WTC11 (cell line): ENCODE measurements at regions of chr15 and their contacts with region 1.

Region 1: GRCh38 chr15:55434989-55435825 is 26.9 kb downstream of the PIERCE2 start:
- DNase-seq: no peak
- ATAC-seq: peak; percentile 80
- H3K4me3 Mint-ChIP-seq: no peak overlapping the region
- H3K27ac Mint-ChIP-seq: no peak overlapping the region
- H3K4me1 Mint-ChIP-seq: peaks cover 4% of the 10 kb centered on the region; the same call in 1 of the 2 replicates
- H3K27me3 Mint-ChIP-seq: no peaks in the 10 kb centered on the region
- CTCF ChIP-seq: no peak

Region 2: GRCh38 chr15:55168329-55168974 is 266.8 kb before region 1 on chr15:
- CTCF ChIA-PET with region 1: interaction called, 10 read pairs
- POLR2A ChIA-PET with region 1: no interaction called
- DNase-seq: peak; percentile 80
- ATAC-seq: peak; percentile 99
- H3K4me3 Mint-ChIP-seq: no peak overlapping the region
- H3K27ac Mint-ChIP-seq: no peak overlapping the region
- H3K4me1 Mint-ChIP-seq: no peaks in the 10 kb centered on the region
- H3K27me3 Mint-ChIP-seq: no peaks in the 10 kb centered on the region
- CTCF ChIP-seq: peak; percentile 65

Region 3: DNA sequence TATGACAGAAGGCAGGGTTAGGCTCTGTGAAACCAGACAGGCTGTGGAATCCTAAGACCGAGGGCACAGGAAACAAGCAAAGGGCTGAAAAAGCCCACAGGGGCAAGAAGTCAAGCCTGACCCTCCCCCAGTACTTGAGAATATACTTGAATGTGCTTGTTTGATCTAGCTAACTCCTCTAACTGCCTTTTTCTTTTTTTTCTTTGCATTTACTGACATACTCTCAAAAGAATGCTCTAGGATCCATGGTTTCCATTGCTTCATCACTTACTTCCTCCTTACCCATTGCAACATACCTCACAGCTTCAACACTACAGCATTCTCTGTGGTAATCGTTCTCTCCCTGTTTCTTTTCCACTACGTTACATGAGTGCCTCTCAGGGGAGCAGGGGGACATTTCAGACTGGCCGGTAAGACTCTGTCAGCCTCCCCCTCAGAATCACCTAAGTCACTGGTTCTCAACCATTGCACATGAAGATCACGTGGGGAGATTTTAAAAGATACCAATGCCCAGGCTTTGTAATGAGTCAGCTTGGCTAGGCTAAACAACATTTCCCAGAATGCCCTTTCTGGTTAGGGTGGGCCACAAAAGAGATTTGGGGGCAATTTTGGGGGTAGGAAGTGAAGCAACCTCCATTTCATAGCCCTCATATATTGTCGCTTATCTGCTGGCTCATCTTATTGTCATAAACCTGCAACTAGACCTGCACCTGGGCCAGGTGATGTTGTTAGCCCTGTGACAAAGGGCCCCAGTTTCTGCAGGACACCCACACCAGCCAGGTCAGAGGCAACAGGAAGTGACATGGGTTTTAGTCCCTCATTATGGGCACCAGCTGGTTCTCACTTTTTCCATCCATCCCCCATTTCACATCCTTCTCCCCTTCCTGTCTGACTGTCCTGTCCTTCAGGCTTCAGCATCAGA is 213.9 kb before region 1 on chr15:
- CTCF ChIA-PET with region 1: interaction called, 32 read pairs
- POLR2A ChIA-PET with region 1: no interaction called
- DNase-seq: no peak
- ATAC-seq: no peak
- H3K4me3 Mint-ChIP-seq: no peak overlapping the region
- H3K27ac Mint-ChIP-seq: peak overlapping the region; percentile 34
- H3K4me1 Mint-ChIP-seq: peaks cover 17% of the 10 kb centered on the region
- H3K27me3 Mint-ChIP-seq: no peaks in the 10 kb centered on the region
- CTCF ChIP-seq: no peak

Region 4: DNA sequence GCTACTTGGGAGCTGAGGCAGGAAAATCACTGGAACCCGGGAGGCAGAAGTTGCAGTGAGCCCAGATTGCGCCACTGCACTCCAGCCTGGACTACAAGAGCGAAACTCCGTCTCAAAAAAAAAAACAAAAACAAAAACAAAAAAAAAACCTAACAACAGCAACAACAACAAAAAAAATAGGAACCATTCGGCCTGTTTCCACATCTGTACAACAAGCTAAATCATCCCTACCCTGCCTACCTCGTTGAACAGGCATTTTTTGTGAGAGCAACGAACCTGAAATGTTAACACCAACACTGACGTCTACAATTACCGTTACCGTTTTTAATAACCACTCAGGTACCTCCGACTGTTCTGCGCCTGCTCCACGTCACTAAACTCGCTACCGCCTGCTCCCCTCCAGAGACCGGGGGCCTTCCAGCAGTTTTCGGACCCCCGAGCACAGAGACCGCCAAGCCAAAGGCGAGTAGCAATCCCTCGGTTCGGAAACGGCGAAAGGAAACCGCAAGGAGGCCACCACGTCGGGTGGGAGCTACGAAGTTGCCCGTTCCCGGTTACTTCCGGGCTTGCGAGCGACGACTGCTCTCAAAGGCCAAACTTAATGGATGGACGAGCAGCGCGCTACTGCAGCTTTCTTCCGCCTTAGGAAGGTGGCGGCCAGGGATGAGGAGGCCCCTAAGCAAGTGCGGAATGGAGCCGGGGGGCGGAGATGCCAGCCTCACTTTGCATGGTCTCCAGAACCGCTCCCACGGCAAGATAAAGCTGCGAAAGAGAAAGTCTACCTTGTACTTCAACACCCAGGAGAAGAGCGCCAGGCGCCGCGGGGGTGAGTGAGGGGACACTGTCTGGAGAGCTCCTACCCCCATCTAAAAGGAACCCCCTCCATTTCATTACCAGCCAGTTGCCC is 116.4 kb before region 1 on chr15 and contains the starts of genes PIGB and PIGBOS1:
- CTCF ChIA-PET with region 1: interaction called, 11 read pairs
- POLR2A ChIA-PET with region 1: no interaction called
- DNase-seq: peak; percentile 82
- ATAC-seq: peak; percentile 95
- H3K4me3 Mint-ChIP-seq: peak within 1 kb of the TSS; percentile 94
- H3K27ac Mint-ChIP-seq: peak within 1 kb of the TSS; percentile 96
- H3K4me1 Mint-ChIP-seq: peaks cover 35% of the 10 kb centered on the region
- H3K27me3 Mint-ChIP-seq: no peaks in the 10 kb centered on the region
- CTCF ChIP-seq: no peak
- total RNA-seq, gene PIGB: 5.2 to 8.7 TPM (median 6.9 TPM) in 3 replicates
- total RNA-seq, gene PIGBOS1: 11.2 to 13.0 TPM (median 11.9 TPM) in 3 replicates

Region 5: DNA sequence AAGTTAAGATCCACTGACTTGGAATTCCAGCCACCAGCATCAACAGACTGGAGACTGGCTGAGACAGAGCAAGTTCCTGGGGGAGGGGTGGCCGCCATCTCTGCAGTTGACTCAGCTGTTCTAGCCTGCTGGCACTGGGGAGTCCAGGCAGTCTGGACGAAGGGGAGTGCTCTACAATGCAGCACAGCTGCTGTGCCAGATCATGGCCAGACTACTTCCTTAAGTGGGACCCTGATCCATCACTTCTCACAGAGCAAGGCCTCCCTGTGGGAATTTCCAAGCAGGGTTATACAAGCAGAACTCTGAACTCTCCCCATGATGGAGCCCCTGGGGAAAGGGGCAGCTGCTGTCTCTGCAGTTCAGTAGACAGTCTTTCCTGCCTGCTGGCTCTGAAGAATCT is 117.7 kb after region 1 on chr15:
- CTCF ChIA-PET with region 1: no interaction called
- POLR2A ChIA-PET with region 1: no interaction called
- DNase-seq: peak; percentile 16
- ATAC-seq: peak; percentile 73
- H3K4me3 Mint-ChIP-seq: no peak overlapping the region
- H3K27ac Mint-ChIP-seq: no peak overlapping the region
- H3K4me1 Mint-ChIP-seq: peaks cover 4% of the 10 kb centered on the region; the same call in 1 of the 2 replicates
- H3K27me3 Mint-ChIP-seq: peaks cover 9% of the 10 kb centered on the region
- CTCF ChIP-seq: no peak

Region 6: DNA sequence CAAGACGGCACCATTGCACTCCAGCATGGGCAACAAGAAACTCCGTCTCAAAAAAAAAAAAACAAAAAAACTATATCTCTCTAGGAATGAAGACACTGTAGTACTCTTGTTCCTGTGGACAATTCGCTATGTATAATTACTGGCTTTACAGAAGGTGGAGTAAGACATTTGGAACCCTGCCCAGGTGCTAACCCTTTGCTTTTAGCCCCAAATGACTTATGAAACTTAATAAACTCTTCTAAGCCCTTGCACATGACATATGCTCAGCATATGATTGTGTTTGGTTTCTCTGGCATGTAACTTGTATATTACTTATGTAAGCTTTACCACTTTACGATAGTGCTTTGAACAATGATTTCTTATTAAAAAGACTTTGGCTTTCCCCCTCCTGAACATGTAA is 335.1 kb after region 1 on chr15:
- CTCF ChIA-PET with region 1: no interaction called
- POLR2A ChIA-PET with region 1: no interaction called
- DNase-seq: no peak
- ATAC-seq: no peak
- H3K4me3 Mint-ChIP-seq: no peak overlapping the region
- H3K27ac Mint-ChIP-seq: no peak overlapping the region
- H3K4me1 Mint-ChIP-seq: peaks cover 8% of the 10 kb centered on the region
- H3K27me3 Mint-ChIP-seq: no peaks in the 10 kb centered on the region
- CTCF ChIP-seq: no peak